ENCODE measurements at regions of chr19 and their contacts with region 1.

Region 1: GRCh38 chr19:18203863-18204393 is at the start of gene RAB3A:
- DNase-seq: peak; percentile 100
- ATAC-seq: peak; percentile 96 to 98
- H3K4me3 ChIP-seq: peak within 1 kb of the TSS; percentile 81
- H3K27ac ChIP-seq: peak within 1 kb of the TSS; percentile 98
- H3K4me1 ChIP-seq: peaks cover 25% of the 10 kb centered on the region
- H3K27me3 ChIP-seq: no peaks in the 10 kb centered on the region
- CTCF ChIP-seq: no peak
- total RNA-seq, gene RAB3A: 2.7 TPM

Region 2: DNA sequence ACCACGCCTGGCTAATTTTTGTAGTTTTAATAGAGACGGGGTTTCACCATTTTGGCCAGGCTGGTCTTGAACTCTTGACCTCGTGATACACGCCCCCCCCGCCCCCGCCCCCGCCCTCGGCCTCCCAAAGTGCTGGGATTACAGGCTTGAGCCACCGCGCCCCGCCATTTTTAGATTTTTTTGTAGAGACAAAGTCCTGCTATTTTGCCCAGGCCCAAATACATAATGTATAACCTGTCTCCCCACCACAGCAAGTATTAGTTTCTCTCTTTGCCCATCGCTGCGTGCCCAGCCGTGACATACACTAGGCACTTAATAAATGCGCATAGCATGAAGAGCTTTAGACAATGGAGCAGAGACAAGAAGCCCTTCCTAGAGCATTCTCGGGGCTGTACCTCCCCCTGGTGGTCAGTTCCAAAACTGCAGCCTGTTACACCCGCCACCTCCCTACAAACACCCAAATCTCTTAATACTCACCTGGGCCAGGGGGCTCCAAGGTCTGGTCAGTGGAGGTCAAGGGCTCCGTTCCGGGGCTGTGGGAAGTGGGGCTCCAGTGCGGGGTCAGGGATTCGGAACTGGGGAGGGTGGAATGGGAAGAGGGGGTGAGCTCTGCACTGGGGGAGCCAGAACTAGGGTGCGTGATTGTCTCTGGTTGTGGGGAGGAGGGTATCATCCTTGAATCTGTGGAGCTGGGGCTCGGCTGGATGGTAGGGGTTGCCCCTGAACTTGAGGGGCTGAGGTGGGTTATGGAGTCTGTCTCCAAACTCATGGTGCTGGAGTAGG is 47.9 kb after region 1 on chr19:
- intact Hi-C with region 1: loop called (anchors 10 kb)
- DNase-seq: peak; percentile 69
- ATAC-seq: peak; percentile 52 to 63
- H3K4me3 ChIP-seq: no peak overlapping the region
- H3K27ac ChIP-seq: no peak overlapping the region
- H3K4me1 ChIP-seq: peaks cover 20% of the 10 kb centered on the region
- H3K27me3 ChIP-seq: no peaks in the 10 kb centered on the region
- CTCF ChIP-seq: peak; percentile 94